ENCODE measurements at regions of chr1 and their contacts with region 1.

Region 1: DNA sequence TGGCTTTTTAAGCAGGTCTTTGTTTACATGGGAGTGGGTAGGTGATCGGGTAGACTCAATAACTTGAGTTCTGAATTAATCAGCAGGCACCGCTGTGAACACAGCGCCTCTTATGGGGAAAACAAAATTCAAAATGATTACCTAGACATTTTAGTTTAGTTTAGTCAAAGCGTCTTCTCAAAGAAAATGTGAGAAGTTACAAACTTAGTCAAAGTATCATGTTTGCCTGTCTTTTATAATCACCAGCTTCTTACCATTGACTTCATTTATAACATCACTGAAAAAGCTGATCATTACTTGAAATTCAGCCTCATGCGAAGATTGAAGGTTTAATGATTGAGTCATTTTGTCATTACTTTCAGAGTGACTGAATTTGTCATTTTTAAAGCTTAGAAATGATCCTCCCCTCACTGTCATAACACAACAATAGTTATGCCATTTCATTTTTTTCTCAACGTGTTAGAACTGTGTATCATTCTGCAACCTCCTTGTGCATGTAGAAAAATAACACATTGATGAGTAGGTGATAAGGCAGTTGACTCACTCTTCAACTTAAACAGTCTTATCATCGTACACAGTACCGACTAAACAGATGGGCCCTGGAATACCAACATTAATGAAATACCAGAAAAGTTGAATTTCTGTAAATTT is 188.5 kb downstream of the NFIA start:
- DNase-seq: no peak
- H3K4me3 Mint-ChIP-seq: no peak overlapping the region
- H3K27ac Mint-ChIP-seq: peak overlapping the region; percentile 32
- H3K4me1 Mint-ChIP-seq: peaks cover 17% of the 10 kb centered on the region
- H3K27me3 Mint-ChIP-seq: peaks cover 10% of the 10 kb centered on the region

Region 2: DNA sequence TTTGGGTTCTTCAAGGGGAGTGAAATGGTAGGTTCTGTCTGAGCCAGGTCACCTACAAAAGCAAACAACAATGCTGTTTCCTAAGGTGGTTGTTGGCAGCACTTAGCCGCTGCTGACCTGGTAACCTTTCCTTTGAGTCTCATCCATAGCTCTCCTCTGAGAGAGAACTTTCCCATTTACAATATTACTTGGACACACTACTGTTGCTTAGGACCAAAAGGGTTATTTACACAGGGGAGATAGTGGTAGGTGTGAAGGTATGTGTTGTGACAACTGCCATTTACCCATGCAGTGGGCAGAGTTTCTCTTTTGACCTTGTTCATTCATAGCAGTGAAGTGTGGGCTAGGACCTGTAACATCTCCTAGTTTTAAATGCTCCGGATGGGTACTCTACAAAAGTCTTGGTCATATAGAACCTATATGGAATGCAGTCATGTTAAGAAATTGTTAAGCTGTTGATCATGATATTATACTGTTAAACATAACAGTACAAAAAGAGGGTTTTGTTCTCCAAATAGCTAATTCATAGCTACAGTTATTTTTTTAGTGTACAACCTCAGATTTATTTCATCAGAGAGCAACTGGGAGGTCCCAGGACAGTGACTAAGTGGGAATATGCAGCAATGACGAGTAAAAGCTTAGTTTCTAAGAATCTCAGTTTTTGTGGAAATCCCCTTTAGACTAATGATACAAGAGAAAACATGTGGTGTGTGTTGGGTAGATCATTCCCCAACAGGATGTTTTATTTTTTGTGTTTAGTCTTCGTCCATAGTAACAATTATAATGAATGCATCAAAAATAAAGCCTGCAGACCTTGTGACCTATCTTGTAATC is 31.2 kb after region 1 on chr1:
- intact Hi-C with region 1: loop called (anchors 1 kb)
- DNase-seq: peak; percentile 16
- H3K4me3 Mint-ChIP-seq: peak overlapping the region; percentile 3
- H3K27ac Mint-ChIP-seq: peak overlapping the region; percentile 84
- H3K4me1 Mint-ChIP-seq: peaks cover 34% of the 10 kb centered on the region
- H3K27me3 Mint-ChIP-seq: peaks cover 2% of the 10 kb centered on the region

Region 3: DNA sequence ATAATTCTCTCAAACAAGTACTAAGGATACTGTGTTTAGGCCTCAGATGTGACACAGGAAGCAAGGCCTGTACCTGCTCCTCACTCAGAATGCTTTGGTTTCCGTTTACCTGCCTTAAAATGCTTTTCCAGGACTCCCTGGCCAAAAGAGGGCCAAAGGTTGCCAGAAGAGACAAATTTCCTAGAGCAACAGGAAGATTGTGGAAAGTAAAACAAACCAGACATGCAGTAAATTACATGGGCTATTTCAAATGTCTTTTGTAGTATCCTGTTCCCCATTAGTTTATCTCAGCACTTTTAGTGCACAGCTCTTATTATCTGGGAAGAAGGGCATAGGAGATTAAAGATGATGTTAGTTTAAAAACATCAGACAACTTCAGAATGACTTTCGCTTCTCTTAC is 91.5 kb after region 1 on chr1:
- intact Hi-C with region 1: no loop called
- DNase-seq: no peak
- H3K4me3 Mint-ChIP-seq: no peak overlapping the region
- H3K27ac Mint-ChIP-seq: no peak overlapping the region
- H3K4me1 Mint-ChIP-seq: no peaks in the 10 kb centered on the region
- H3K27me3 Mint-ChIP-seq: no peaks in the 10 kb centered on the region

Region 4: DNA sequence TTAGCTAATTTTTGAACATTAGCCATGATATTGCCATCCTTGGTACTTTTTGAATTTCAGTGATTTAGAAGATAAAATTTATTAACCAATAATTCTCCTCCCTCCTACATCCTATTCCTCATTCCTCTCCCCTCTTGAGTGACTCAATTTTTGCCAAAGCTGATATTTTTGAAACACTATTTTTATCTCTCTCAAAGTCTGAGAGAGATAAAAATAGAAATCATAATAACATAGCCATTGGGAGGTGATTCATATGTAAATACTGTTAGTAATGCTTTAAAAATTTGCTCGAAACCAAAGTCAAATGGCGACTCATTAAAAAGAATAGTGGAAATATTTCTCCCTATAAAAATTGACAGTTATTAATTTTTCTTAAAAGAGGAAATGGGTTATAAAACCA is 568.8 kb after region 1 on chr1:
- intact Hi-C with region 1: no loop called
- DNase-seq: no peak
- H3K4me3 Mint-ChIP-seq: no peak overlapping the region
- H3K27ac Mint-ChIP-seq: no peak overlapping the region
- H3K4me1 Mint-ChIP-seq: no peaks in the 10 kb centered on the region
- H3K27me3 Mint-ChIP-seq: no peaks in the 10 kb centered on the region

Measured in activated T-helper 1 cell treated with anti-CD3 and anti-CD28 coated beads, Interleukin-12 subunit alpha, Interleukin-12 subunit beta, Interleukin-2, Interleukin-4 antibody, amounts not matched to agents 30 ng/mL and 10 ng/mL and 1 ng/mL, durations not matched to agents 14 hours and 24 hours and 36 hours (primary cell).